ENCODE measurements at regions of chr15 and their contacts with region 1.

Region 1: GRCh38 chr15:40782580-40783227 is 12.9 kb downstream of the C15orf62 start:
- DNase-seq: peak; percentile 60 to 85 (median 73)
- ATAC-seq: peak; percentile 90 to 96 (median 94)
- H3K4me3 ChIP-seq: no peak overlapping the region
- H3K4me3 Mint-ChIP-seq: no peak overlapping the region
- H3K27ac ChIP-seq: no peak overlapping the region
- H3K27ac Mint-ChIP-seq: peak overlapping the region in 1 of 2 donors; percentile 55
- H3K4me1 ChIP-seq: peaks cover 3 to 14% of the 10 kb centered on the region in 2 experiments
- H3K4me1 Mint-ChIP-seq: peaks cover 16 to 22% (median 18%) of the 10 kb centered on the region in 3 donors
- H3K27me3 ChIP-seq: no peaks in the 10 kb centered on the region
- H3K27me3 Mint-ChIP-seq: no peaks in the 10 kb centered on the region

Region 2: DNA sequence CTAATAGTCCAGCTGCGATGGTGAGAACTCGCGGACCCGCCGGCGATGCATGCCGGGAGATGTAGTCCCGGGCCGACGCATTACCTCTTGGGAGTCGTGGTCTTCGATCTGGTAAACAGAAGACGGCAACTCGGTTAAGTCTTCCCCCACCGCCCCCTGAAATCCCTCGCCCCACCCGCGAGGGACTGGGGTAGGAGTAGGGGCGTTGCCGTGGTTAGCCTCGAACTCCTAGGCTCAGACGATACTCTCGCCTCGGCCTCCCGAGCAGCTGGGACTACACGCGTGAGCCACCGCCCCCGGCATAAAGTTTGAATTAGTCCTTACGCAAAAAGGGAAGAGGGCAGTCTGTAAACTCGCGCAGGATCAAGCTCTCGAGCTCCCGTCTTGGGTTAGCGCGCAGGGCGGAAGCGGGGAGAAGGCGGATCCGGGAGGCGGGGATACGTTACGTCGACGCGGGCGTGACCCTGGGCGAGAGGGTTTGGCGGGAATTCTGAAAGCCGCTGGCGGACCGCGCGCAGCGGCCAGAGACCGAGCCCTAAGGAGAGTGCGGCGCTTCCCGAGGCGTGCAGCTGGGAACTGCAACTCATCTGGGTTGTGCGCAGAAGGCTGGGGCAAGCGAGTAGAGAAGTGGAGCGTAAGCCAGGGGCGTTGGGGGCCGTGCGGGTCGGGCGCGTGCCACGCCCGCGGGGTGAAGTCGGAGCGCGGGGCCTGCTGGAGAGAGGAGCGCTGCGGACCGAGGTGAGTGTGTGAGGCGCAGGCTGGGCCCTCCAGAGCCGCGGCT is 87.8 kb before region 1 on chr15 and contains the start of gene RAD51:
- CTCF ChIA-PET with region 1: interaction called in 1 of 2 experiments, 11 read pairs
- POLR2A ChIA-PET with region 1: interaction called in 1 of 2 experiments, 3 read pairs
- DNase-seq: peak; percentile 82 to 95 (median 91)
- ATAC-seq: peak; percentile 95 to 96 (median 96)
- H3K4me3 ChIP-seq: peak within 1 kb of the TSS; percentile 96 to 97
- H3K4me3 Mint-ChIP-seq: peak within 1 kb of the TSS; percentile 98 to 100 (median 99)
- H3K27ac ChIP-seq: peak within 1 kb of the TSS; percentile 99
- H3K27ac Mint-ChIP-seq: peak within 1 kb of the TSS; percentile 96 to 100
- H3K4me1 ChIP-seq: peaks cover 9 to 23% of the 10 kb centered on the region in 2 experiments
- H3K4me1 Mint-ChIP-seq: peaks cover 19 to 27% (median 23%) of the 10 kb centered on the region in 3 donors
- H3K27me3 ChIP-seq: no peaks in the 10 kb centered on the region
- H3K27me3 Mint-ChIP-seq: no peaks in the 10 kb centered on the region
- total RNA-seq, gene RAD51: 0.85 to 2.5 (median 1.2) TPM

Region 3: DNA sequence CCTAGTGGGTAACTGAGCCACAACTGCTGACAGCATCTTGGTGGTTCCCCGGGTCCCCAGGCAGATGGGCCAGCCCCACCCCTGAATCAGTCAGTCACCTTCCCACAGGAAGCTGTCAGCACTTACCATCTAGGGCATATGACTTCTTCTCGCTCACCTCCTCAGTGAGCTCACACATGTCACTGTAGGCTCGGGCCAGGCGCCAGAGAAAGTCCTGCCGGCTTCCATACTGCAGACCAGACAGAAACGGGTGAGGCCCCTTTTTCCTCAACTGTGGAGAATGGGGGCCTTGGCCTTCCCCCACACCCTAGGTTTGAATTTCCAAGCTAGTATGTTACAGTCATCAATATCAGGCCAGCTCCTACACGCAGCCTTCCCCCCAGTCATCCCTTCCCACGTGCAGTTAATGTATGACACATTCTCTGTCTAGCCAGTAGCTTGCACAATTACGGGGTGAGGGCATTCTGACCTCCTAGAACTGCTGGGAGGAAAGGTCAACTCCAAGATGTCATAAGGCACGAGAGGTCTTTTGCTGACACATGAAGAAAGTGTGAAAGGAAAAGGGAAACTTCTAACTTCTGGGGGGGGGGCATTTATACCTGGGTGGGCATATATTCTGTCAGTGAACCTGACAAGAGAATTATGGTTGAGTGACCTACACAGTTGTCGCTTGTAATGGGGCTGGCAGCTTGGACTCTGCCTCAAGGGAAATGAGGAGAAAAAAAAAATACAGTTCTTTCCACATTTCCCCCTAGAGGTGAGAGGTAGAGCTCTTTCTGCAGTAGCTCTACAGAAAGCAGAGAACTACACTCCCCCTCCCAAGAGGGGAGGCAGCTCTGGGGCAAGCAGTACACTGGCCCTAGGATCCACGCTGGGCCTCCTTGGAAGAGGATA is 38.5 kb before region 1 on chr15:
- CTCF ChIA-PET with region 1: interaction called, 4 to 14 read pairs
- POLR2A ChIA-PET with region 1: no interaction called
- DNase-seq: peak in 34 of 35 experiments; percentile 33 to 85 (median 55)
- ATAC-seq: peak; percentile 90 to 99 (median 94)
- H3K4me3 ChIP-seq: no peak overlapping the region
- H3K4me3 Mint-ChIP-seq: no peak overlapping the region
- H3K27ac ChIP-seq: peak overlapping the region; percentile 80
- H3K27ac Mint-ChIP-seq: peak overlapping the region; percentile 91 to 93
- H3K4me1 ChIP-seq: peaks cover 0 to 22% of the 10 kb centered on the region in 2 experiments
- H3K4me1 Mint-ChIP-seq: peaks cover 0 to 22% (median 6%) of the 10 kb centered on the region in 3 donors
- H3K27me3 ChIP-seq: no peaks in the 10 kb centered on the region
- H3K27me3 Mint-ChIP-seq: no peaks in the 10 kb centered on the region

Region 4: GRCh38 chr15:41180206-41180789 is 397.6 kb after region 1 on chr15:
- CTCF ChIA-PET with region 1: no interaction called
- POLR2A ChIA-PET with region 1: no interaction called
- DNase-seq: no peak
- ATAC-seq: no peak
- H3K4me3 ChIP-seq: no peak overlapping the region
- H3K4me3 Mint-ChIP-seq: no peak overlapping the region
- H3K27ac ChIP-seq: no peak overlapping the region
- H3K27ac Mint-ChIP-seq: no peak overlapping the region
- H3K4me1 ChIP-seq: no peaks in the 10 kb centered on the region
- H3K4me1 Mint-ChIP-seq: no peaks in the 10 kb centered on the region
- H3K27me3 ChIP-seq: no peaks in the 10 kb centered on the region
- H3K27me3 Mint-ChIP-seq: peaks cover 4 to 6% of the 10 kb centered on the region in 2 donors

Region 5: DNA sequence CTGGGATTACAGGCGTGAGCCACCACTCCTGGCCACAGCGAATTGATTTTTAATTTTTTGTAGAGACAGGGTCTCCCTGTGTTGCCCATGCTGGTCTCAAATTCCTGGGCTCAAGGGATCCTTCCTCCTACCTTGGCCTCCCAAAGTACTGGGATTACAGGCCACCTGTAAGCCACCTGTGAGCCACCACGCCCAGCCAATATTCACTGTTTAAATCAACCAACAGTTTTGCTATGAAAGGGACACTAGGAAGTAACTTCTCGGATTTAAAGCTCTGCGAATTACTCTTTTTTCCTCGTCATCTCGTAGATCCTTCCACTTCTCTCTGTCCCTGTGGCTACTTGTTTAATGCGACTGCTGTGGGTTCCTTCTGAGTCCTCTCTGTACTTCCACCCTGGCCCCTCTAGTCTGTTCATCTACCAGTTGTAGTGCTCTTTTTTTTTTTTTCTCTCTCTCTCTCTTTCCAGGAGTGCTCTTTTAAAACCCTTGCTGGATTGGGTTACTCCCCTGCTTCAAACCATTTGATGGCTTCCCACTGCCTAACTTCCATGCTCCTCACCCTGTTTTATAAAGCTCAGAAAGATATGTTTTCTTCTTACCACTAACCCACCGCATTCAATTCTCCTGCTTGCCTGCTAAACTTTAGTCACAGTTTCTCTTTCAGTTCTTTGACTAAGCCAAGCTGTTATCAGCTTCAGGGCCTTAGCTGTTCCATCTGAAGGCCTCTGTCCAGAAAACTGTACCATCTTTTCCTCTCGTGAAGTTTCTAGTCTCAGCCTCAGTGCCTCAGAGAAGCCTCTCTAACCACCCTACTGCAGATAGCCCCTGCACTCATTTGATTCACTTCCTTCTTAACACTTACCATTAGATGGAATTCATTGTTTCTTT is 646.5 kb after region 1 on chr15:
- CTCF ChIA-PET with region 1: interaction called in 1 of 2 experiments, 12 read pairs
- POLR2A ChIA-PET with region 1: no interaction called
- DNase-seq: no peak
- ATAC-seq: no peak
- H3K4me3 ChIP-seq: no peak overlapping the region
- H3K4me3 Mint-ChIP-seq: peak overlapping the region; percentile 1 to 32 (median 29)
- H3K27ac ChIP-seq: no peak overlapping the region
- H3K27ac Mint-ChIP-seq: peak overlapping the region; percentile 61 to 76
- H3K4me1 ChIP-seq: peaks cover 0 to 9% of the 10 kb centered on the region in 2 experiments
- H3K4me1 Mint-ChIP-seq: peaks cover 22 to 27% (median 24%) of the 10 kb centered on the region in 3 donors
- H3K27me3 ChIP-seq: no peaks in the 10 kb centered on the region
- H3K27me3 Mint-ChIP-seq: no peaks in the 10 kb centered on the region

Measured in T-cell (primary cell).